Right cardiac atrium (tissue), 5 donors: ENCODE measurements at regions of chr12 and their contacts with region 1.

Region 1: DNA sequence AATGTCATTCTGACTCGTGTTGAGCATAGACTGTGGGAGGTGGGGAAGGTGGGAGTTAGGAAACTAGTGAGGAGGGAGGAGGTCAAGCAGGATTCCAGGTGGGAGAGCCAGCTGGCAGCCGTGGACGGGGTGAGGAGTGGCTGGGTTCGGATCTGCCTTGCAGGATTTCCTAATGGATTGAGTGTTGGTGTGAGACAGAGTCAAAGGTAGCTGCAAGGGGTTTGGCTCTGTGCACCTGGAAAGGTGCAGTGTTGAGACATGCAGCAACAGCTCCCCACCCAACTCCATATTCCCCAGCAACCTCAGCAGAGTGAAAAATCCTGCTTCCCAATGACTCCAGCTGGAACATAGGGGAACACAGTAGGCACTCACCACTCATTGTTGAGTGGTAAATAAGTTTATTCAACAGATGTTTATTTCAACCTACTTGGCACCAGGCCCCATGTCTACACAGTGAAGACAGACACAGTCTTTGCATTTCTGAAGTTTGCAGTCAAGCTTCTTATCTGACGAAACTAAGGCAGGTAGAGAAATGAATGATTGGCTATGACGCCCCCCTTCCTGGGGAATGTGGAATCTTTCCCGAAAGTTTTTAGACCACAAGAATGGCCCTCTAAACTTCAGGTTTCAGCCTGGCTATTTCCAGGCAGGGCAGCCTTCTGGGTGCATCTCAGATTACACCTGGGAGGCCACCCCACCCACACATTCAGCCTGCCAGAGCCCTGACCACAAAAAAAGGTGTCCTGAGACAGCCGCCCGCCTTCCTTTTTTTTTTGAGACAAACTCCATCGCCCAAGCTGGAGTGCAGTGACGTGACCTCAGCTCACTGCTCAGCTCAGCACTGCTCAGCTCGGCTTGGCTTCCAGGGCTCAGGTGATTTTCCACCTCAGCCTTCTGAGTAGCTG is 37.9 kb upstream of the PLEKHG6 start:
- DNase-seq: no peak
- ATAC-seq: no peak
- H3K4me3 ChIP-seq: no peak overlapping the region
- H3K27ac ChIP-seq: no peak overlapping the region
- H3K4me1 ChIP-seq: peaks cover 3% of the 10 kb centered on the region
- H3K27me3 ChIP-seq: no peaks in the 10 kb centered on the region

Region 2: DNA sequence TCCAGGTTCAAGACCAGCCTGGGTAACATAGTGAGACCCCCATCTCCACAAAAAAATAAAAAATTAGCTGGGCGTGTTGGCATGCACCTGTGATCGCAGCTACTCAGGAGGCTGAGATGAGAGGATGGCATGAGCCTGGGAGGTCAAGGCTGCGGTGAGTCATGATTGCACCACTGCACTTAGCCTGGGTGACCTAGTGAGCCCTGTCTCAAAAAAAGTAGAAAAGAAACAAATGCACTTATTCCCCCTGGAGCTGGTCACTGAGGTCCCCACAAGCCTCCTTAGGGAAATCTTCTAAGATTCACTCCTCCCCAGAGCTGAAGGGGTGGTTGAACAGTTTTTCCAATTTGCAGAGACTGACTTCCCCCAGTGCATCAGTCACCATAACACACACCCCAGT is 70.7 kb before region 1 on chr12:
- intact Hi-C with region 1: loop called in 2 of 4 experiments (anchors 2 to 5 kb)
- DNase-seq: peak in 2 of 3 donors; percentile 20 to 45
- ATAC-seq: no peak
- H3K4me3 ChIP-seq: peak overlapping the region; percentile 79
- H3K27ac ChIP-seq: peak overlapping the region; percentile 56
- H3K4me1 ChIP-seq: no peaks in the 10 kb centered on the region
- H3K27me3 ChIP-seq: no peaks in the 10 kb centered on the region